Aorta (tissue), 5 donors: ENCODE measurements at regions of chr6 and their contacts with region 1.

Region 1: DNA sequence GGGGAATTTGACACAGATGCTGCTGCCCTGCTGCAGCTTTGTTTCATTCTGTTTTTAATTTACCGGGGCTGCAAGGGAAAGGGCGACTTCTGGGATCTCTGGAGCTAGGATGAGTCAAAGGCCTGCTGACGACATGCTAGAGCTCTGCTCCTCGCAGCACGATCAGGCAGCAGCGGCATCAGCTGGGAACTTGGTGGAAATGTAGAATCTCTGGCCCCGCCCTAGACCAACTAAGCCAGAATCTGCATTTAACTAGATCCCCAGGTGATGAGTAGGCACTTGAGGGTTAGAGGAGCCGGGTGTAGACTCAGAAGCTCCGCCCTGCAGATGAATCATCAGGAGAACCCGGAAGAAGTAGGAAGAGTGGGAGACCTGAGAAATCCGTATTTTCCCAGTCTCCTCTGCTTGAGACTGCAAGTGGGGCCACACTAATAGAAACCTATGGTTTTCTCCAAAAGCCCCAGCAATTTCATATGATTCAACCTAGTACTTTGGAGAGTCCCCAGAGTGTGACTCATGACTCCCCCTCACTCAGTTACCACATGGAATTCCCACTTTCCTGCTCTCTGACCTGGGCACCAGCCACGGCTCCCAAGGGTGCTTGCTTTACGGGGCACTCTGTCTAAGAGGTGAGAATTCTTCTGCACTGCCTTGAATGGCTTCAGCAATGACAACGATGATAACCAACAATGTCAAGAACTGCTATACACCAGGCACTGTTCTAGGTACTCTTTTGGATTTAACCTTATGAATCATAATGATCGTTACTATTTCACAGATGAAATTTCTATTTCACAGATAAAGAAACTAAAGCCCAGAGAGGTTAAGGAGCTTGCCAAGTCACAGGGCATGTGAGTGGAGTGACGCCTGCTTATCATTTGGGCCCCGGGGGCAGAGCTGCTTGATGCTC is 18.1 kb downstream of the TUBB2B start:
- DNase-seq: peak in 1 of 2 donors; percentile 76
- ATAC-seq: peak; percentile 66
- H3K4me3 ChIP-seq: no peak overlapping the region
- H3K27ac ChIP-seq: no peak overlapping the region
- H3K4me1 ChIP-seq: peaks cover 0 to 2% of the 10 kb centered on the region in 2 donors
- H3K27me3 ChIP-seq: no peaks in the 10 kb centered on the region

Region 2: GRCh38 chr6:3157131-3157927 is 52.0 kb before region 1 on chr6 and contains the start of gene TUBB2A:
- intact Hi-C with region 1: loop called in 1 of 2 experiments (anchors 2 kb)
- DNase-seq: peak; percentile 92 to 95
- ATAC-seq: peak; percentile 94
- H3K4me3 ChIP-seq: peak within 1 kb of the TSS; percentile 83 to 89
- H3K27ac ChIP-seq: peak within 1 kb of the TSS in 1 of 2 donors; percentile 58
- H3K4me1 ChIP-seq: no peaks in the 10 kb centered on the region
- H3K27me3 ChIP-seq: peaks cover 0 to 2% of the 10 kb centered on the region in 2 donors
- total RNA-seq, gene TUBB2A: 33.7 to 40.0 TPM

Region 3: GRCh38 chr6:3162565-3163247 is 46.7 kb before region 1 on chr6:
- intact Hi-C with region 1: loop called (anchors 2 to 5 kb)
- DNase-seq: peak; percentile 81 to 89
- ATAC-seq: peak; percentile 82
- H3K4me3 ChIP-seq: peak overlapping the region; percentile 3 to 50
- H3K27ac ChIP-seq: peak overlapping the region; percentile 10 to 42
- H3K4me1 ChIP-seq: no peaks in the 10 kb centered on the region
- H3K27me3 ChIP-seq: no peaks in the 10 kb centered on the region

Region 4: DNA sequence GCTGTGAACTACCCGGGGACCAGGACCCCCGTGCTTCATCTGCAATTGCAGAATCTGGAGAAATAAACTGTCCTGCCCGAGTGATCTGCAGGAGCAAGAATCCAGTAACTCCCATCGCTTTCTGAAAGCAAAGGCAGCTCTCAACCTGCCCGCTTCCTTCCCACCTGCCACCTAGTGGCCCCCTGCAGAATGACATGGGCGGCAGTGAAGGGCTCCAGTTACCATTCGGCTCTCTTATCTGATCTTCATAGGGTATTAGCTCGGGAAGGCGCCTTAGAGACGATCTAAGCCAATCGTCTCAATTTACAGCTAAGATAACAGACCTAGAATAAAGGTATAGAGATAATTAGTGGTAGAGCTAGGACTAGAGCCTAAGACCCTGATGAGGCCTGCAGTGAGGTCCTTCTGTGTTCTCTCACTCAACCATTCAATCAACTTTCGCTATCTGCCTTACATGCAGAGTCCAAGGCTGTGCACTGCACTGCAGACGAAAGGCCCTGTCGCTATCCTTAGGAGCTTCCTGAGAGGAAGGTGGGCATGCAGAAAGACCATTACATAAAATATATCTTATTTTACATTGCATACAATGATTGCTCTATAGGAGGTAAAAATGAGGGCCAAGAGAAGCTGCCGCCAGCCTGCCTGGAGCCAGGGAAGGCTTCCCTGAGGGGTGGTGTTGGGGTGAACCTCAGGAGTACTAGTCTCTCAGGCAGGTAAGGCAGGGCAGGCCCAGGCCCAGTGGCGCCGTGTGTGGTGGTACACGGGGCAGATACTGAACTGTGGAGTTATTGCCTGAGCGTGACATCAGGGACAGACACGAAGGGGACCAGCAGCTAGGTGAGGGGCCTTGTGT is 42.3 kb after region 1 on chr6:
- intact Hi-C with region 1: loop called in 1 of 2 experiments (anchors 5 kb)
- DNase-seq: peak; percentile 86 to 94
- ATAC-seq: peak; percentile 81
- H3K4me3 ChIP-seq: no peak overlapping the region
- H3K27ac ChIP-seq: no peak overlapping the region
- H3K4me1 ChIP-seq: no peaks in the 10 kb centered on the region
- H3K27me3 ChIP-seq: no peaks in the 10 kb centered on the region

Region 5: GRCh38 chr6:3294921-3295871 is 85.8 kb after region 1 on chr6:
- intact Hi-C with region 1: no loop called
- DNase-seq: peak in 1 of 2 donors; percentile 63
- ATAC-seq: no peak
- H3K4me3 ChIP-seq: no peak overlapping the region
- H3K27ac ChIP-seq: no peak overlapping the region
- H3K4me1 ChIP-seq: no peaks in the 10 kb centered on the region
- H3K27me3 ChIP-seq: no peaks in the 10 kb centered on the region